Activated CD4-positive, alpha-beta memory T cell treated with anti-CD3 and anti-CD28 coated beads for 36 hours (primary cell): ENCODE measurements at regions of chr13 and their contacts with region 1.

Region 1: DNA sequence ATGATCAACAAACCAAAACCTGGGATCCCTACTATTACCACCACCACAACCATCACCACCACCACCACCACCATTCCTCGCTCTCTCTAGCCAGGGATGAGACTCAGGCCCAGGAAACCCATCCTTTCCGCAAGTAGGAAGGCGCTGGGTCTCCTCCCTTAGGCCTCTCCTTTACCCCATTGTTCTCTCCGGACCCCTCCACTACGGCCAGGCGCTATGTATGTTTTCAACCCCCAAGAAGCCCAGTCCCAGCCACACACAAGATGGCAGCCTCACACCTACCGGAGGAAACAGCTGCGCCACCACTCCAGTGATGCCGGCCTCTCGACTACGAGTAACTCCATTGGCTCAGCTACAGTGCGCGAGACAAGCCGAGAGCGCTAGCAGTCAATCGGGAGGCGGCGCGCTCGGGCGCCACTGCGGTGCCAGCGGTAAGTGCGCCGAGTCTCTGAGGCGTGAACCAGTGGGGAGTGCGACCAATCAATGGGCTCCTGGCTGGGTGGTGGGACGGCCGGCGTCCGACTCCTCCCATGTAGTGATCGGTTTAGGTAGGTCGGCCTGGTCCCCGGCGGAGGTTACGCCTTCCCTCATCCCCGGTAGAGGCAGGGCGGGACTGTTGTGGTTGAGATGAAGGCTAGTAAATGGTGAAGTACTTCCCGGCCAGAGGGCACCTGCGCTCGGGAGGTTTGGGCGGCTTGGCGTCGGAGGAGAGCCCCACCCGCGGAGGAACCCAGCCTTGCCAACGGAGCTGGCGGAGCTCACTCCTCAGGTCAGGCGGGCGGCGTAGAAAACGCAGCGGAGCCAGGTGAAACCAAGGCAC is at the starts of genes CAB39L and SETDB2:
- DNase-seq: peak; percentile 100
- H3K4me3 Mint-ChIP-seq: peak within 1 kb of the TSS; percentile 85
- H3K27ac Mint-ChIP-seq: peak within 1 kb of the TSS; percentile 94
- H3K4me1 Mint-ChIP-seq: peaks cover 62% of the 10 kb centered on the region
- H3K27me3 Mint-ChIP-seq: no peaks in the 10 kb centered on the region
- total RNA-seq, gene CAB39L: 5.6 to 6.3 TPM
- total RNA-seq, gene SETDB2: 13.9 to 15.9 TPM

Region 2: DNA sequence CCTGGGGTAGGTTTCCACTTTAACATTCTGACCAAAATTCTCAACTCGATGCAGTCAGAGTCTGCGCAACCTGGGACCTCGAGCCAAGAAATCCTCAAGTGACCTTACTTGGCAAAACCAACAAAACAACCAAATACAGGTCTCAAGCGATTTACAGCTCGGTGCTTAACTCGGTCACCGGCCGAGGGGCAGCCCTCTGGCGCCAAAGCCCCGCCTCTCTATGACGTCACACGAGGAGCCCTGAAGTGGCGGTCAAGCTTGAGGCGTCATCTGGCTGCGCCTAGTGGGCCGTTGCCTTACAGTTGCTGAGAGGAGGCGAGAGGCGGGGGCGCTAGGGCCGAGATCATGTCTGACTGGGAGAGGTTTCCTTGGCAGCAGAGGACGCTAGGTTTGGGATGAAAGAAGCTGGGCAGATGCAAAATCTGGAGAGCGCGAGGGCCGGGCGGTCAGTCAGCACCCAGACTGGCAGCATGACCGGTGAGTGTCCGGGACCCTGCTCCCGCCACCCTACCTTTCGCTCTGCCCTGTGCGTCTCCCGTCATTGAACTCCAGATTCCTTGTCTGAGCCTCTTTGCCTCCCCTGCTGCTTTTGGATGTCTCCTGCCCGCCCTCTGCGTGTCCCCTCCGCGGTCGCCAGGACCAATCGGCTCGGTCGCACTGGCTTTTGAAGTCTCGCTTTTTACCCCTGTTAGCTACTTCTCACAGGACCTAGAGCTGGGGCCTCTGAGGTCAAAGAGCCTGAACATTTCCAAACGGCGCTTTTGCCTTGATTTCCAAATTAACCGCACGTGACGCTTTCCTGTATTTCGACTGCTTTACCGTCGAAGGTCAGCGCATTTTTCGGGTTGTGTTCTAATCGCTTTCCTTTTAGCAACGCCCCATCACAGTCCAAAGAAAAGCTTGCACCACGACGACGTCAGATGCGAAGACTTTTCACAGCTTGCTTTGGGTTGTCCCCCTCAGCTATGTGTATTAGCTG is 196.0 kb before region 1 on chr13 and contains the start of gene CDADC1:
- CTCF ChIA-PET with region 1: no interaction called
- POLR2A ChIA-PET with region 1: interaction called, 13 read pairs
- intact Hi-C with region 1: loop called (anchors 5 kb)
- DNase-seq: peak; percentile 97
- H3K4me3 Mint-ChIP-seq: peak within 1 kb of the TSS; percentile 90
- H3K27ac Mint-ChIP-seq: peak within 1 kb of the TSS; percentile 88
- H3K4me1 Mint-ChIP-seq: peaks cover 34% of the 10 kb centered on the region
- H3K27me3 Mint-ChIP-seq: no peaks in the 10 kb centered on the region
- total RNA-seq, gene CDADC1: 9.0 to 11.1 TPM

Region 3: DNA sequence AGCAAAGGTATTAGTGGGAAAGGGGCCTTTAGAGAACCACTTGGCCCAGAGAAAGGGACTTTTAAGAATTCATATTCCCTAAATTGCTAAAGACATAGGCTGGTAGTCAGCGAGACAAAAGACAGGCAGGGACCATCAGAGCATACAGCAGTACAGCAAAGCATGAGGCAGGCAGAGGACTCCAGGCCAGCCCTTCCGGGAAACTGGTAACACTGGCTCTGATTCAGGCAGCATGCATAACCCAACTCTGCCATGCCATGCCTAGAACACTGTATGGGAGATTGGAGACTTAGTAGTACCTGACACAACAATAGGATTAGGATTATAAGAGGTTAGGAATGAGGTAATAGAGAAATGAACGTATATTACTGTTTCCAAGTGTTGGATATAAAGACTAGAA is 34.9 kb before region 1 on chr13:
- CTCF ChIA-PET with region 1: no interaction called
- POLR2A ChIA-PET with region 1: no interaction called
- intact Hi-C with region 1: no loop called
- DNase-seq: no peak
- H3K4me3 Mint-ChIP-seq: no peak overlapping the region
- H3K27ac Mint-ChIP-seq: no peak overlapping the region
- H3K4me1 Mint-ChIP-seq: no peaks in the 10 kb centered on the region
- H3K27me3 Mint-ChIP-seq: no peaks in the 10 kb centered on the region

Region 4: DNA sequence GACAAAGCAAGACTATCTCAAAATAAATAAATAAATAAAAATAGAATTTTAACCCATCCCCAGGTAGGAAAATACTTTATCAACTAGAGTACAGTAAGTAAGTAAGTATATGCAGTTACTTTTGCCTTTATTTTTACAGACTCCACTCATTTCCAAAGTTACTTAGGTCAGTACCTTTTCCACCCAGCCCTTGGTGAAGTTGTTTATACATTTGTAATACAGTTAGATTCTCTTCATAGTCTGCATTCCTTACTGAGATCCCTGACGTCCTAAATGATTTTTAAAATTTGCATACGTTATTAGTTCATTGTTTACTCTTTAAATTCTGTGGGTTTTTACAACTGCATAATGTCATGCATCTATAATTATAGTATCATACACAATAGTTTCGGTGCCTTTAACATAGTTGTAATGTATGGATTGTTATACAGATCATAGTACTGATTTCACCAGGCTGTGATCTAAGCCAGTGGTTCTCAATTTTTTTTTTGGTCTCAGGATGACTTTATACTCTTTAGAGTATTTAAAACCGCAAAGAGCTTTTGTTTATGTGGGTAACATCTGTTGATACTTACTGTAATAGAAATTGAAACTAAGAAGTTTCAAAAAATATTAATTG is 10.6 kb after region 1 on chr13:
- CTCF ChIA-PET with region 1: interaction called, 8 read pairs
- POLR2A ChIA-PET with region 1: interaction called, 4 read pairs
- intact Hi-C with region 1: loop called (anchors 1 kb)
- DNase-seq: no peak
- H3K4me3 Mint-ChIP-seq: no peak overlapping the region
- H3K27ac Mint-ChIP-seq: peak overlapping the region; percentile 79
- H3K4me1 Mint-ChIP-seq: peaks cover 35% of the 10 kb centered on the region
- H3K27me3 Mint-ChIP-seq: no peaks in the 10 kb centered on the region

Region 5: DNA sequence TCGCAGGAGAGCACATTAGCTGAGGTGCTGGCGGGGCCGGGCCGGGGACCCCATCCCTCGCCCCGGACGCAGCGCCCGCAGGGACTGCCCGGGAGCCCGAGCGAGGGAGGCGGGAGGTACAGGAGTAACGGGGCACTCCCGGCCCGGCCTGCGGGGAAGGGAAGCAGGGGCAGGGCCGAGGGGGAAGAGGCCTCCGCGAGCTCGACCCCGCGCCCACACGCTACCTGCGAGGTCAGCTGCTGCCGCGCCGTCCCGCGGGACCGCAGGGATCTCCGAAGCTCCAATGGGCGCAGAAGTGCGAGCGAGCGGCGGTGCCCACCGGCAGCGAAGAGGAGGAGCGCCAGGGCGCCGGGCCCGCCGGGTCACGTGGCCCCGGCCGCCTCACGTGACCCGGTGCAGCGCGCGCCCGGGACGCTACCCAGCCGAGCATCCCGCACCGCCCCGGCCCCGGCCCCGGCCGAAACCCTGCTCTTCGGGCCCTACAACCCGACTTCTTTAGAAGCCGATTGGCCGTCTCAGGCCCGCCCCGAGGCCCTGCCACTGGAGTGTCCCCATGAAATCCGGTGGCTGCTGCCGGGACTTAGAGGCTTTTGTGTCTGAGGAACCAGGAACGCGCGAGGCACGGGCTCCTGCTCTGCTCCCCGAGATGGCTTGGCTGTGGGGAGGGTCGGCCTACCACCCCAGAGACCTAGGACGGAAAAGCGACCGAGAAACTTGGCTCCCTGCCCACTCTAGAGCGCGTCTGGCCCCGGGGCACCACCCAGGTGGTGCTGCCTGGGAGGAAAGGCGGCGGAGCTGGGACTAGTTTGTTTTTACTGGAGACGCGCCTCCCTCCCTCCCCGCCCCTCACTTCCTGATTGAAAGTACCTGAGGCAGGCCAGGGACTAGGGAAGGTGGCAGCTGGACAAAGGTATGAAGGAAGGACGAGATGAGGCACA is 141.6 kb after region 1 on chr13 and contains the start of gene RCBTB1:
- CTCF ChIA-PET with region 1: interaction called, 3 read pairs
- POLR2A ChIA-PET with region 1: interaction called, 5 read pairs
- intact Hi-C with region 1: loop called (anchors 2 kb)
- DNase-seq: peak; percentile 74
- H3K4me3 Mint-ChIP-seq: peak within 1 kb of the TSS; percentile 82
- H3K27ac Mint-ChIP-seq: peak within 1 kb of the TSS; percentile 64
- H3K4me1 Mint-ChIP-seq: peaks cover 31% of the 10 kb centered on the region
- H3K27me3 Mint-ChIP-seq: no peaks in the 10 kb centered on the region
- total RNA-seq, gene RCBTB1: 18.7 to 19.3 TPM

Region 6: DNA sequence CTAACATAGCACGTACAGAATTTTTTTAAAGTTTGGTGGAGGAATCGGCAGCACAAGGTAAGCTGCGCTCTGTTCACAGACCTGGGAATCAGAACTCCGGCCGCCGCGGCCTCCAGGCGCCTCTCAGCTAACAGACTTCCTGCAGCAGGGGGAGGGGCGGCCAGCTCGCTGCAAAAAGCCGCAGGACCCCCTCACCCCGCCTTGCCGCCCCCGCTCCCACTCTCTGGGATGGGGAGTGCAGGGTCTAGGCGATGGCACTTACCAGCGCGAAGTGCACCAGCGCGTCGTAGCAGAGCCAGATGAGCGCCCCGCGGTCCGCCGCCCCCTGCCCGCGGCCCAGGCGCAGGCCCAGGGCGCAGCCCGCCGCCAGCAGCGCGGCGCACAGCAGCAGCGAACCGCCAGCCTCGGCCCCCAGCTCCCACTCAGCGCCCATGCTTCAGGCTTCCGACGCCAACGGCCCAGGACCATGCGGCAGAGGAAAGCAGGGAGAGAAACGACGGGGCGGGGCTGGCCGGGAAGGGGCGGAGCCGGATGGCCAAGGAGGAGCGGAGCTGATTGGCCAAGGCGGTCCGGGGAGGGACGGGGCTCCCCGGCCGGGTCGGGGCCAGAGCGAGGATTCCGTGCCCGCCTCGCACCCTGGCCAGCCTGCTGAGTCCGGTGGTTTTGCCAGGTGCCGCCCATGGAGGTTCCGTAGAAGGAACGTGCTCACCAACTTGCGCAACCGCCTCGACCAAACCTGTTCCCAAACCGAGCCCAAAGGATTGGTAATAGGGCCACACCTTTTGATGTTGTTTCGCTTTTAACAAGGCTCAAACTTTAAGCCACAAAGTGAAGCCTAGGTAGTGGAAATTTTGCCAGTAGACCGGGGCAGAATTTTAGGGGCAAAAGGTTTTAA is 247.3 kb after region 1 on chr13 and contains the start of gene EBPL:
- CTCF ChIA-PET with region 1: no interaction called
- POLR2A ChIA-PET with region 1: interaction called, 4 read pairs
- intact Hi-C with region 1: loop called (anchors 5 kb)
- DNase-seq: peak; percentile 94
- H3K4me3 Mint-ChIP-seq: peak within 1 kb of the TSS; percentile 83
- H3K27ac Mint-ChIP-seq: peak within 1 kb of the TSS; percentile 62
- H3K4me1 Mint-ChIP-seq: peaks cover 15% of the 10 kb centered on the region
- H3K27me3 Mint-ChIP-seq: no peaks in the 10 kb centered on the region
- total RNA-seq, gene EBPL: 36.1 to 36.2 TPM

Region 7: DNA sequence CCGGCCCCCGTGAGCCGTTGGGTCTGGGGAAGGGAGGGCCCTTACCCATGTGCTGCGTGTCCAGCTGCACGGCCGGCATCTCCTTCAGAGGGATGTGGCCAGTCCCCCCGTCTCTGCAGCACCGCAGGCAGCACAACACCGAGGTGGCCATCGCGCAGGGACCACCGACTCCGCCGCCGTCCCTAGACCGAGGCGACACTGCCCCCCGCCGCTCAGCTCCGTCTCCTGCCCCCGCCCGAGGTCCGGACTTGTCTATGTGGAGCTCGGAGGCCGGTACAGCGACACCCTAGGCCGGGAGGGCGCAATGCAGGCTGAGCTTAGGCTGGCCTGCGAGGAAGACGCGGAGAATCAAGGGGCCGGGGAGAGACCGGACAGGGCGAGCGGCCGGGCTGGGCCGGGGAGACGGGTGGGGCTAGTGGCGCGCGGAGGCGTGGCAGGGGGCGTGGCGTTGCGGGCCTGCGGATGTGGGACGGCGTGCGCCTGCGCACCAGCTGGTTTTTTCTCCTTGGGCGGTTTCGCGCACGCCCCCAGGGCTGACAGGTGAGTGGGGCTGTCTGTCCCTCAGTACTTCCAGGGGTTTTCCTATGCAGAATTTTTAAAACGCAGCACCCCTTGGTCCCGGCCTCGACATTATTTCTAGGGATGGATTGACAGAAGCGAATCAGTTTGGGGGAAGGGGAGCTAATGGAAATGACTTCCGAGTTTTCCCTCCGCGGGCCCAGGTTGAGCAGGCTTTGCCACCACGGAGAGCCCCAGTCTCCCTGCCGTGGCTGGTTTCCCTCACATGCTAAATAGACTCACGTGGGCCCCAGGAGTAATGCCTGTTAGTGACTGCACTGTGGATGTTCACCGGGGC is 492.4 kb after region 1 on chr13 and contains the start of gene SPRYD7:
- CTCF ChIA-PET with region 1: interaction called, 3 read pairs
- POLR2A ChIA-PET with region 1: no interaction called
- intact Hi-C with region 1: loop called (anchors 2 kb)
- DNase-seq: peak; percentile 97
- H3K4me3 Mint-ChIP-seq: peak within 1 kb of the TSS; percentile 92
- H3K27ac Mint-ChIP-seq: peak within 1 kb of the TSS; percentile 77
- H3K4me1 Mint-ChIP-seq: peaks cover 12% of the 10 kb centered on the region
- H3K27me3 Mint-ChIP-seq: no peaks in the 10 kb centered on the region
- total RNA-seq, gene SPRYD7: 4.9 to 5.4 TPM

Region 8: GRCh38 chr13:50911937-50912795 is 1468.3 kb after region 1 on chr13:
- CTCF ChIA-PET with region 1: no interaction called
- POLR2A ChIA-PET with region 1: no interaction called
- intact Hi-C with region 1: no loop called
- DNase-seq: peak; percentile 95
- H3K4me3 Mint-ChIP-seq: peak overlapping the region; percentile 94
- H3K27ac Mint-ChIP-seq: peak overlapping the region; percentile 98
- H3K4me1 Mint-ChIP-seq: peaks cover 51% of the 10 kb centered on the region
- H3K27me3 Mint-ChIP-seq: no peaks in the 10 kb centered on the region